ENCODE measurements at regions of chr3 and their contacts with region 1.

Region 1: DNA sequence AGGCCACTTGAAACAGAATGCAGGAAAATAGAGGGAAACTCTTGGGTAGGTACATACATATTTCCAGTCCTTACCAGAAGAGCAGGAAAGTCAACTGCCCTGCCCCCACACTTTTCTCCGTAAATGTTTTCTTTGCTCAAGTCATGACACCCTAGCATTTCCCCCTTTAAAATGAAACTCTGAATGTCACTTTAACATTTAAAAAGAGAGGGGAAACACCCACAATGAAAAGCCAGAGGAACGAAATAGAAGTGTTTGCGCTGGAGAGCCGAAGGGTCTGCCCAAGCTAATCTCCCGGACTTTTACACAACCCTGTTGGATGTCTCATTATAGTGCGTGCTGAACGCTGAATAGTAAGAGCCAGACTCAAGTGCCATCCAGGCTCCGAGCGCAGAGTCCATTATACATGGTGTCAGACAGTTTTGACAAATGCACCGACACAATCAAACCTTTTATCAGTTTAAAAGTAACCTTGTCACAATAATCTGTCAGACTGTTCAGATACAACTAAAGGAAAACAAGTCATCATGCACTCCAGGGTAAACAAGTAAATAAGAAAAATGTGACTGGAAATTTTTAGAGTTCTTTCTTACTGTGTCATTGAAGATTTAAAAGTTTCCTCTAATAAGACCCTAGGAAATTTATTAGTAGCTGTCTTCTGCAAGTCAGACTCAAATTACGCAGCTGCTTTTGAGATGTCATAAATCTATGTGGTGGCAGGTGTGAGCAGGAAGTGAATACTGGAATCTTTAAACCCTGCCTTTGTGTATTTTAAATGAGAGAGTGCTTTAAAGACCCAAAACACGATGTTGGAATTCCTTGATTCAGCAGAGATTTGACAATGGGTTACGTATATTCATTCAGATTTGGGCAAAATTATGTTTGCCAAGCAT is 159.8 kb downstream of the RBMS3 start:
- DNase-seq: no peak
- H3K4me3 ChIP-seq: peak overlapping the region in 2 of 3 donors; percentile 16 to 19
- H3K27ac ChIP-seq: no peak overlapping the region
- H3K4me1 ChIP-seq: no peaks in the 10 kb centered on the region
- H3K27me3 ChIP-seq: no peaks in the 10 kb centered on the region
- CTCF ChIP-seq: no peak
- POLR2A ChIP-seq: no peak

Region 2: DNA sequence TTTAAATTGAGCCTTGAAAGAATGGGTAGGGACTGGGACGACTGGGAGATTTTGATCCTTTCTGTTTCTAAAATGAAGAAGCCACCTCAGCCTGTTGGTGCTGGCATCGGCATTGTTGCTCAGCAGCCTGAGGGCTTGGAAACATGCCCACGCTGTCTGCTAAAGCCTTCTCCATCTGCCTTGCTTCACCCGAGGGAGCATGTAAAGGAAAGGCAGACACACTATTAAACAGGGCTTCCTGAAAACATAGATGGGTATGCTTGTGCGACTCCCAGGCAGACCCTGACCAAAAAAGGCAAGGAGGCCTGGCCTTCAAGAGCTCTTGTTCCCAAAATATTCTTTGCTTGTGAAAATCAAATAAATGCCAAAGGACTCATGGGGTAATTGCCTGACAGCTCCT is 1872.3 kb before region 1 on chr3:
- intact Hi-C with region 1: loop called (anchors 10 kb)
- DNase-seq: peak; percentile 72 to 78
- H3K4me3 ChIP-seq: peak overlapping the region in 1 of 3 donors; percentile 2
- H3K27ac ChIP-seq: peak overlapping the region; percentile 35 to 61
- H3K4me1 ChIP-seq: peaks cover 0 to 4% of the 10 kb centered on the region in 2 donors
- H3K27me3 ChIP-seq: no peaks in the 10 kb centered on the region
- CTCF ChIP-seq: no peak
- POLR2A ChIP-seq: no peak

Region 3: GRCh38 chr3:29397406-29397805 is 43.3 kb before region 1 on chr3:
- intact Hi-C with region 1: no loop called
- DNase-seq: no peak
- H3K4me3 ChIP-seq: no peak overlapping the region
- H3K27ac ChIP-seq: no peak overlapping the region
- H3K4me1 ChIP-seq: no peaks in the 10 kb centered on the region
- H3K27me3 ChIP-seq: no peaks in the 10 kb centered on the region
- CTCF ChIP-seq: no peak
- POLR2A ChIP-seq: no peak